ENCODE measurements at regions of chr3 and their contacts with region 1.

Region 1: DNA sequence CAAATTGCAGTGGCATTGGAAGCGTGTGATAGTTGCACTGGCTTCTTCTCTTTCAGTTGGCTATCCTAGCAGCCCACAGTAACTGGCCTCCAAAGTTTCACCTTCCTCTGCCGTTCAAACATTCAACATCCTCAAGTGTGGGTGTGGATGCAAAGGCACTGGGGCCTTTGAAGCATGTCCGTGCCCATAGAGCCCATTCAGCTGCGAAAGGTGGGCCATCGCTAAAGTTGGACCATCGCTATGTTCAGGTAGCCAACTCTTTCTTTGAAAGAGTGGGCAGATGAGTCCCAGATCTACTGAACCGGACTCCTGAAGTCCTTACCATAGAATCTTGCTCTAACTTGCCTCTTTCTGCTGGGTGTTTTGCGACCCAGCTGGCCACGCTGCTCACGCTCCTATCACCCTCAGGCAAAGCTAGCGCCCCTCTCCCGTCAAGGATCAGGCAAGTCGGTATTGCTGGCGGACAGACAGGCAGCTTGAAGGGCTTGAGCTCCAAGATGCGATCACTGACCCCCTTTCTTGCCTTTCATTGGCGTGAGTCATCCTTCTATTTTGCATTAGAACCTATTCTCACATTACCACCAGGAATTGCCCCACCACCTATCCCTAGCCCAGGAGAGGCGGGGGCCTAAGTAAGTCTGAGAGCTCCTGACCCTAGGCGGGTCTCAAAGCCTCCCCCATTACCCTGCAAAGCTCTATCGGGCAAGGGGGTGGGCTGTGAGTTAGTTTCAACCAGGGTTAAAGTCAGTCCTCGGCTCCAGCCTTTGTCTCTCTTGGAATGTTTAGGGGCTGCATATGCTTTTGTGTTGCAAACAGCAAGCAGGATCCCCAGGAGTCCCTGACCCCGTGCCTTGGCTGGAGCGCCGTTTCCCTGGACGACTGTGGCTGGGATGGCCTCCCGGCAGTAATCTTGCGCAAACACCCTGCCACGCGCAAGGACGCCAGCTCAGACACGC is 28.7 kb downstream of the ZIC4 start:
- DNase-seq: no peak
- H3K4me3 ChIP-seq: no peak overlapping the region
- H3K27ac ChIP-seq: no peak overlapping the region
- H3K4me1 ChIP-seq: peaks cover 0 to 6% (median 0%) of the 10 kb centered on the region in 4 donors
- H3K27me3 ChIP-seq: peaks cover 0 to 99% (median 51%) of the 10 kb centered on the region in 4 donors
- CTCF ChIP-seq: no peak
- EP300 ChIP-seq: no peak
- POLR2A ChIP-seq: no peak

Region 2: DNA sequence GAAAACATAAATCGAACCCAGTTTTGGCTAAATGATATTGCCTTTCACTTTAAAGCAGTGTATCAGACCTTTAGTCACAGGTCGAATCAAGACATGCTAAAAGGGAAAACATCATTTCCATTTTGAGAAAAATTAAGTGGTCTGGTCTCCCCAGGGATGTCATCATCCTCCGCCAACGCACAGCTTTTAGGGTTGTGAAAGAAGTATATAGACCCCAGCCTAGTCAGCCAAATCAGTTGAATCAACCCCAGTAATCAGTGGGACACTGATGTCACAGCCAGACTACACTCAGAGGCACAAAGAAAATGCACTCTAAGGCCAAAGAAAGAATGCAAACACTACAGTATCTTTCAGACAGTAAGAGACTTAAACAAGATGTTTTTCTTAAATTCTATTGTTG is 158.7 kb before region 1 on chr3:
- intact Hi-C with region 1: no loop called
- DNase-seq: no peak
- H3K4me3 ChIP-seq: no peak overlapping the region
- H3K27ac ChIP-seq: no peak overlapping the region
- H3K4me1 ChIP-seq: no peaks in the 10 kb centered on the region
- H3K27me3 ChIP-seq: no peaks in the 10 kb centered on the region
- CTCF ChIP-seq: no peak
- EP300 ChIP-seq: no peak
- POLR2A ChIP-seq: no peak

Region 3: DNA sequence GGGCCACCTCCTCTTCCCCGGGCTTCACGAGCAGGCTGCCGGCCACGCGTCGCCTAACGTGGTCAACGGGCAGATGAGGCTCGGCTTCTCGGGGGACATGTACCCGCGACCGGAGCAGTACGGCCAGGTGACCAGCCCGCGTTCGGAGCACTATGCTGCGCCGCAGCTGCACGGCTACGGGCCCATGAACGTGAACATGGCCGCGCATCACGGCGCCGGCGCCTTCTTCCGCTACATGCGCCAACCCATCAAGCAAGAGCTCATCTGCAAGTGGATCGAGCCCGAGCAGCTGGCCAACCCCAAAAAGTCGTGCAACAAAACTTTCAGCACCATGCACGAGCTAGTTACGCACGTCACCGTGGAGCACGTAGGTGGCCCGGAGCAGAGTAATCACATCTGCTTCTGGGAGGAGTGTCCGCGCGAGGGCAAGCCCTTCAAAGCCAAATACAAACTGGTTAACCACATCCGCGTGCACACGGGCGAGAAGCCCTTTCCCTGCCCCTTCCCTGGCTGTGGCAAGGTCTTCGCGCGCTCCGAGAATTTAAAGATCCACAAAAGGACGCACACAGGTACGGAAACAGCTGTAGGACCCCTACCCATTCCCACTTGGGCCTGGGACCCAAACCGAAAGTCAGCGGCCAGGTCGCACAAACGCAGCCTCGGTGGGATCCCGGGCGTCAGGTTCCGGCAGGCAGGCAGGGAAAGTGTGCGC is 33.0 kb after region 1 on chr3:
- intact Hi-C with region 1: loop called (anchors 5 kb)
- DNase-seq: peak; percentile 70
- H3K4me3 ChIP-seq: peak overlapping the region; percentile 29 to 47 (median 38)
- H3K27ac ChIP-seq: no peak overlapping the region
- H3K4me1 ChIP-seq: peaks cover 37 to 78% (median 56%) of the 10 kb centered on the region in 4 donors
- H3K27me3 ChIP-seq: peaks cover 9 to 100% (median 98%) of the 10 kb centered on the region in 4 donors
- CTCF ChIP-seq: no peak
- EP300 ChIP-seq: no peak
- POLR2A ChIP-seq: no peak

Region 4: GRCh38 chr3:147744967-147745366 is 367.3 kb after region 1 on chr3:
- intact Hi-C with region 1: no loop called
- DNase-seq: no peak
- H3K4me3 ChIP-seq: no peak overlapping the region
- H3K27ac ChIP-seq: no peak overlapping the region
- H3K4me1 ChIP-seq: no peaks in the 10 kb centered on the region
- H3K27me3 ChIP-seq: no peaks in the 10 kb centered on the region
- CTCF ChIP-seq: no peak
- EP300 ChIP-seq: no peak
- POLR2A ChIP-seq: no peak

Measured in esophagus muscularis mucosa (tissue), 4 donors.